CD8-positive, alpha-beta T cell (primary cell): ENCODE measurements at regions of chr2 and their contacts with region 1.

Region 1: DNA sequence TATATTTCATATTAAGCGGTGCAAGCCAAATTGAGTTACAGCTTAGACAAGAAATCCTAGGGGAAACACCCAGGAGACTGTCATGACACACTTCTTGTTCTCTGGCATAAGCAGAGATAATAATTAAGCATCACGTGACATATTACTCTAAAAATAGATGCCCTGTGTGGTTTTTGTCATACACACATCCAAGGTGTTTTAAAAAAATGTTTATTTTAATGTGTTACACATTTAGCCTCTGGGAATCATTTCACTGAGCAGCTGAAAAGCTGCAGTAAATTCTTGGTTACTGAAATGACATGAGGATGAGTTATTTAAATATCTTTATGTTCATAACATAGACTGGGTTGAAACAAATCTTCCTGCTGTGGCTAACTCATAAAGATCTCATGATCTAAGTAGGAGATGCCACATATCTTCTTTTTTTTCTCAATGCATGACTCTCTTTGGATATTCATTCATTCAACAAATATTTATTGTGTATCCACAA is 38.0 kb upstream of the ERMN start:
- DNase-seq: peak in 1 of 9 experiments; percentile 33
- ATAC-seq: no peak
- H3K4me3 ChIP-seq: no peak overlapping the region
- H3K4me3 Mint-ChIP-seq: peak overlapping the region; percentile 6
- H3K27ac ChIP-seq: peak overlapping the region in 1 of 2 experiments; percentile 34
- H3K27ac Mint-ChIP-seq: peak overlapping the region; percentile 29
- H3K4me1 ChIP-seq: peaks cover 29% of the 10 kb centered on the region
- H3K4me1 Mint-ChIP-seq: peaks cover 46% of the 10 kb centered on the region
- H3K27me3 ChIP-seq: no peaks in the 10 kb centered on the region
- H3K27me3 Mint-ChIP-seq: no peaks in the 10 kb centered on the region
- CTCF ChIP-seq: no peak

Region 2: GRCh38 chr2:157349949-157350515 is 13.6 kb before region 1 on chr2:
- CTCF ChIA-PET with region 1: interaction called, 4 read pairs
- POLR2A ChIA-PET with region 1: interaction called, 5 read pairs
- intact Hi-C with region 1: loop called in 1 of 2 experiments (anchors 2 kb)
- DNase-seq: no peak
- ATAC-seq: no peak
- H3K4me3 ChIP-seq: no peak overlapping the region
- H3K4me3 Mint-ChIP-seq: no peak overlapping the region
- H3K27ac ChIP-seq: no peak overlapping the region
- H3K27ac Mint-ChIP-seq: no peak overlapping the region
- H3K4me1 ChIP-seq: peaks cover 13% of the 10 kb centered on the region
- H3K4me1 Mint-ChIP-seq: peaks cover 64% of the 10 kb centered on the region
- H3K27me3 ChIP-seq: no peaks in the 10 kb centered on the region
- H3K27me3 Mint-ChIP-seq: no peaks in the 10 kb centered on the region
- CTCF ChIP-seq: no peak